CD14-positive monocyte (primary cell): ENCODE measurements at regions of chr22 and their contacts with region 1.

Region 1: DNA sequence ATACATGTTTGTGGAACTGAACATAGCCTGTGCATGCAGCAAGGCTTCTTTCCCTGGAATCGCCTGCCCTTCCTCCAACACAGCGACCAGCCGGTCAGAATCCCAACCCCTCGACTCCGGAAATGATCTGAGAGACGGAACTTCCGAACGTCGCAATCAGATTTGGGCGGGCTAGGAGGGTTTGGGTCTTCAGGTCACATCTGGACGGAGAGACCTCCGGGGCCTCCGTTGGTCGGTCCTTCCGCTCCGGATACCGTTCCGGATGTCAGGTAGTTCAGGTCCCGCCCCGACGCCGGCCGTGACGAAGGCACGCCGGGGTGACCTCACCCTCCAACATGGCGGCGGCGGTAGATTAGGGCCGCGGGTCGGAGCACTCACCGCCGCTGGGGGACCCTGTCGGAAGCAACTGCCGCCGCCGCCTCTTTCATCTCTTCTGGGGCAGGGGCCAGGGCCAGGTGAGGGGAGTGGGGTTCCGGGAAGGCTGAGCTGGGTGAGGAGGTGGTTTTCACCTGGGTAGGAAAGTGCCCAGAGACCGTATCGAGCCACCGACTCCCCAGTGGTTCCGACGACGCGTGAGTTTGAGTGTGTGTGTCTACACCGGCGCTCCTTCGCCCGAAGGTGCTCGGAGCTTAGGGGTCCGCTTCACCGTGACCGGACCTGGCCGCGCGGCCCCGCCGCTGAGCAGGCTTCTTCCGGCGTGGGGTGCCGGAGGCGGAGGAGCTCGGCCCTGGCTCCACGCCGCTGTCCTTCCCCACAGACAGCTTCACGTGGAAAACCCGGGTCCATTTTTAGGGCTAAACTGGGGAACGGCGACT is at the start of gene BCL2L13:
- DNase-seq: peak; percentile 78 to 86 (median 81)
- H3K4me3 ChIP-seq: peak within 1 kb of the TSS; percentile 77 to 89 (median 84)
- H3K4me3 Mint-ChIP-seq: peak within 1 kb of the TSS; percentile 91 to 98
- H3K27ac ChIP-seq: peak within 1 kb of the TSS; percentile 97 to 98
- H3K27ac Mint-ChIP-seq: peak within 1 kb of the TSS; percentile 98 to 100 (median 99)
- H3K4me1 ChIP-seq: peaks cover 34 to 45% of the 10 kb centered on the region in 2 donors
- H3K4me1 Mint-ChIP-seq: peaks cover 41% of the 10 kb centered on the region
- H3K27me3 ChIP-seq: no peaks in the 10 kb centered on the region
- H3K27me3 Mint-ChIP-seq: no peaks in the 10 kb centered on the region
- CTCF ChIP-seq: no peak
- polyA plus RNA-seq, gene BCL2L13: 20.2 to 67.8 (median 53.0) TPM

Region 2: GRCh38 chr22:17628304-17629166 is 10.1 kb before region 1 on chr22 and contains the start of gene ATP6V1E1:
- intact Hi-C with region 1: loop called in 1 of 2 experiments (anchors 1 kb)
- DNase-seq: peak; percentile 95 to 99 (median 98)
- H3K4me3 ChIP-seq: peak within 1 kb of the TSS; percentile 67 to 95 (median 94)
- H3K4me3 Mint-ChIP-seq: peak within 1 kb of the TSS; percentile 90 to 96
- H3K27ac ChIP-seq: peak within 1 kb of the TSS; percentile 93 to 98
- H3K27ac Mint-ChIP-seq: peak within 1 kb of the TSS; percentile 97 to 99 (median 98)
- H3K4me1 ChIP-seq: peaks cover 29 to 30% of the 10 kb centered on the region in 2 donors
- H3K4me1 Mint-ChIP-seq: peaks cover 28% of the 10 kb centered on the region
- H3K27me3 ChIP-seq: no peaks in the 10 kb centered on the region
- H3K27me3 Mint-ChIP-seq: no peaks in the 10 kb centered on the region
- CTCF ChIP-seq: no peak
- polyA plus RNA-seq, gene ATP6V1E1: 114 to 147 (median 144) TPM

Region 3: GRCh38 chr22:17672417-17672991 is 33.9 kb after region 1 on chr22:
- intact Hi-C with region 1: loop called in 1 of 2 experiments (anchors 5 kb)
- DNase-seq: peak in 1 of 3 donors; percentile 8
- H3K4me3 ChIP-seq: peak overlapping the region in 1 of 3 experiments; percentile 6
- H3K4me3 Mint-ChIP-seq: peak overlapping the region in 1 of 2 donors; percentile 63
- H3K27ac ChIP-seq: peak overlapping the region in 1 of 2 donors; percentile 83
- H3K27ac Mint-ChIP-seq: peak overlapping the region; percentile 88 to 97 (median 94)
- H3K4me1 ChIP-seq: peaks cover 58 to 61% of the 10 kb centered on the region in 2 donors
- H3K4me1 Mint-ChIP-seq: peaks cover 68% of the 10 kb centered on the region
- H3K27me3 ChIP-seq: no peaks in the 10 kb centered on the region
- H3K27me3 Mint-ChIP-seq: peaks cover 0 to 1% (median 0%) of the 10 kb centered on the region in 3 donors
- CTCF ChIP-seq: no peak

Region 4: DNA sequence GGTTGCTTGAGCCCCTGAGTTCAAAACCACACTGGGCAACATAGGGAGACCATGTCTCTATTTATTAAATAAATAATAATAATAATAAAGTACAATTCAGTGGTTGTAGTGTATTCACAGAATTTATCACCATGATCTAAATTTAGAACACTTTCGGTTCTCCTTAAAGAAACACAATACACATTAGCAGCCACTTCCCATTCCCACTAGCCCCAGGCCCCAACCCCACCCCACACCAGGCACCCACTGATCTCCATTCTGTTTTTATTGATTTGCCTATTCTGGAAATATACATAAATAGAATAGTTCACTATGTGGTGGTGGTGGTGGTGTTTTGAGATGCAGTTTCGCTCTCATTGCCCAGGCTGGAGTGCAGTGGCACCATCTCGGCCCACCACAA is 45.6 kb after region 1 on chr22:
- intact Hi-C with region 1: loop called in 1 of 2 experiments (anchors 5 kb)
- DNase-seq: peak in 2 of 3 donors; percentile 50 to 66
- H3K4me3 ChIP-seq: peak overlapping the region in 2 of 3 experiments; percentile 18 to 38
- H3K4me3 Mint-ChIP-seq: peak overlapping the region; percentile 49 to 55
- H3K27ac ChIP-seq: peak overlapping the region; percentile 56 to 66
- H3K27ac Mint-ChIP-seq: peak overlapping the region; percentile 81 to 92 (median 89)
- H3K4me1 ChIP-seq: peaks cover 36 to 46% of the 10 kb centered on the region in 2 donors
- H3K4me1 Mint-ChIP-seq: peaks cover 34% of the 10 kb centered on the region
- H3K27me3 ChIP-seq: no peaks in the 10 kb centered on the region
- H3K27me3 Mint-ChIP-seq: no peaks in the 10 kb centered on the region
- CTCF ChIP-seq: no peak

Region 5: DNA sequence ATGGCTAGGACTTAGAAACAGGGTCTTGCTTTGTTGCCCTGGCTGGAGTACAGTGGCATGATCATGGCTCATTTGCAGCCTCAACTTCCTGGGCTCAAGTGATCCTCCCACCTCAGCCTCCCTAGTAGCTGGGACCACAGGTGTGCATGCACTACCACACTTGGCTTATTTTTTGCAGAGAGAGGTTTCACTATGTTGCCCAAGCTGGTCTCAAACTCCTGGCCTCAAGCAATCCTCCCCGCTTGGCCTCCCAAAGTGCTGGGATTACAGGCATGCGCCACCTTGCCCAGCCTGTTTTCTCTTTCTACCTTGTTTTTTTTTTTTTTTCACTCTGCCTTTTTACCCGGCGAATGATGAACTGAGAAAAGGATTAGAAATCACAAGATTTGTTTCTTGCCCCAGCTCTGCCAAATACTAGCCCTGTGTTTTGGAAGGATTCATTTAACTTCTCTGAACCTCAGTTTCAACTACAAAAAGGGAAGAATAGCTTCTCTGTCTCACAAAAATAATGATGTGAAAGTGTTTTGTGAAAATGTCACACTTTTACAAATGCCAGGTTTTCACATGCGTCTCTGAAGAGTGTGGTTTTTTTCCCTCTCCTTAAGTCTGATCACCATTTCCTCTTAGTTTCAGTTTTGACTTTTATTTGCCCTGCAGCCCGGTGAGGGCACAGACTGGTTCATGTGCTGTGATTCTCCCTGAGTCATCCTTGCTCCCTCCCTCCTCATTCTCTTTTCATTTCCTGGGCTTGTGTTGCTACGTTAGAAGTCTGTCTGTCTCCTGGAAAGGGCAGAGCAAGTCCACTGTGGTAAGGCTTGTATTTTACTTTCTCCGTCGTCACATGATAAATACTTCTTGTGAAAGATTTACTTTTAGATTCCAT is 67.6 kb after region 1 on chr22:
- intact Hi-C with region 1: loop called (anchors 5 kb)
- DNase-seq: peak; percentile 78 to 88 (median 86)
- H3K4me3 ChIP-seq: peak overlapping the region; percentile 23 to 71 (median 55)
- H3K4me3 Mint-ChIP-seq: peak overlapping the region; percentile 79 to 92
- H3K27ac ChIP-seq: peak overlapping the region; percentile 82 to 83
- H3K27ac Mint-ChIP-seq: peak overlapping the region; percentile 93 to 98 (median 95)
- H3K4me1 ChIP-seq: peaks cover 23 to 25% of the 10 kb centered on the region in 2 donors
- H3K4me1 Mint-ChIP-seq: peaks cover 30% of the 10 kb centered on the region
- H3K27me3 ChIP-seq: no peaks in the 10 kb centered on the region
- H3K27me3 Mint-ChIP-seq: no peaks in the 10 kb centered on the region
- CTCF ChIP-seq: no peak

Region 6: DNA sequence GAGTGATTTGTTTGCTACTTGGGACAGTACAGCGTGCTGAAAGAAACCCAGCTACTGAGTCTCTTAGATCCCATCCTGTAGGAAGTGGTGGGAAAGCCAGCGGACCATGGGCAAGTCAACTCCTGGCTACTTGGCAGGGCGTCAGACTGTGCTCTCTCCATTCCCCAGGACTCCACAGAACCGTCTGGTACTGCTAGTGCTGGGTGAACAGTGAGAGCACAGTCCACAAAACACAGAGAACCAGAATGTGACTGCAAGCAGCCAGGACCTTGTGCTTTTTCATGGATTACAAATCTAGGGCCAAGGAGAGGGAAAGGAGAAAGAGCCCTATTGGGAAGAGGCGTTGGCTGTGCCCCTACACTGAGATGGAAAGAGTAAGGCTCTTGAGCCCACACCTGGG is 125.4 kb after region 1 on chr22:
- intact Hi-C with region 1: no loop called
- DNase-seq: no peak
- H3K4me3 ChIP-seq: no peak overlapping the region
- H3K4me3 Mint-ChIP-seq: peak overlapping the region in 1 of 2 donors; percentile 0
- H3K27ac ChIP-seq: peak overlapping the region in 1 of 2 donors; percentile 33
- H3K27ac Mint-ChIP-seq: peak overlapping the region in 6 of 7 donors; percentile 24 to 88 (median 66)
- H3K4me1 ChIP-seq: peaks cover 63 to 83% of the 10 kb centered on the region in 2 donors
- H3K4me1 Mint-ChIP-seq: peaks cover 58% of the 10 kb centered on the region
- H3K27me3 ChIP-seq: no peaks in the 10 kb centered on the region
- H3K27me3 Mint-ChIP-seq: no peaks in the 10 kb centered on the region
- CTCF ChIP-seq: no peak